ENCODE measurements at regions of chr9 and their contacts with region 1.

Region 1: DNA sequence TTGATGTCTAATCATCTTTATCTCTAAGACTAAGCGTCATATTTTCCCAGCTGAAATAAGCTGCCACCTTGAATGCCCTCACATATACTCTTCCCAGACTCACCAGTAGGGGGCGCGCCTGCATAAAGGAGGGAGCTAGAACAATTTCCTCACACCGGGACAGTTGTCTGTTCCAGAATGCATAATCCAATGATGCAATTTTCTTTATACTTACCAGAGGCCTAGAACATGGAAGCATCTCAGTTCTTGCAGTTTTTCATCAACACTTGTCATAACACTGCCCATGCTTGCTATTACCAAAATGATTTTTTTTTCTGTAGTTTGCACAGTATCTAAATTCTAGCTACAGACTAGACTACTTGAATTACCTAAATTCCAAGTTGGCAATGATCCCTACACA is 203.9 kb downstream of the FRMD3 start:
- DNase-seq: peak; percentile 81 to 92
- H3K4me3 ChIP-seq: no peak overlapping the region
- H3K27ac ChIP-seq: no peak overlapping the region
- H3K4me1 ChIP-seq: peaks cover 0 to 4% of the 10 kb centered on the region in 2 donors
- H3K27me3 ChIP-seq: no peaks in the 10 kb centered on the region
- CTCF ChIP-seq: peak; percentile 94 to 96 (median 95)
- POLR2A ChIP-seq: no peak

Region 2: GRCh38 chr9:83204047-83204446 is 130.3 kb before region 1 on chr9:
- intact Hi-C with region 1: loop called (anchors 10 kb)
- DNase-seq: peak in 1 of 2 donors; percentile 10
- H3K4me3 ChIP-seq: no peak overlapping the region
- H3K27ac ChIP-seq: no peak overlapping the region
- H3K4me1 ChIP-seq: no peaks in the 10 kb centered on the region
- H3K27me3 ChIP-seq: no peaks in the 10 kb centered on the region
- CTCF ChIP-seq: peak in 4 of 6 experiments; percentile 12 to 41 (median 32)
- POLR2A ChIP-seq: no peak

Region 3: GRCh38 chr9:83384214-83384613 is 49.9 kb after region 1 on chr9:
- intact Hi-C with region 1: no loop called
- DNase-seq: no peak
- H3K4me3 ChIP-seq: no peak overlapping the region
- H3K27ac ChIP-seq: no peak overlapping the region
- H3K4me1 ChIP-seq: no peaks in the 10 kb centered on the region
- H3K27me3 ChIP-seq: no peaks in the 10 kb centered on the region
- CTCF ChIP-seq: no peak
- POLR2A ChIP-seq: no peak

Region 4: DNA sequence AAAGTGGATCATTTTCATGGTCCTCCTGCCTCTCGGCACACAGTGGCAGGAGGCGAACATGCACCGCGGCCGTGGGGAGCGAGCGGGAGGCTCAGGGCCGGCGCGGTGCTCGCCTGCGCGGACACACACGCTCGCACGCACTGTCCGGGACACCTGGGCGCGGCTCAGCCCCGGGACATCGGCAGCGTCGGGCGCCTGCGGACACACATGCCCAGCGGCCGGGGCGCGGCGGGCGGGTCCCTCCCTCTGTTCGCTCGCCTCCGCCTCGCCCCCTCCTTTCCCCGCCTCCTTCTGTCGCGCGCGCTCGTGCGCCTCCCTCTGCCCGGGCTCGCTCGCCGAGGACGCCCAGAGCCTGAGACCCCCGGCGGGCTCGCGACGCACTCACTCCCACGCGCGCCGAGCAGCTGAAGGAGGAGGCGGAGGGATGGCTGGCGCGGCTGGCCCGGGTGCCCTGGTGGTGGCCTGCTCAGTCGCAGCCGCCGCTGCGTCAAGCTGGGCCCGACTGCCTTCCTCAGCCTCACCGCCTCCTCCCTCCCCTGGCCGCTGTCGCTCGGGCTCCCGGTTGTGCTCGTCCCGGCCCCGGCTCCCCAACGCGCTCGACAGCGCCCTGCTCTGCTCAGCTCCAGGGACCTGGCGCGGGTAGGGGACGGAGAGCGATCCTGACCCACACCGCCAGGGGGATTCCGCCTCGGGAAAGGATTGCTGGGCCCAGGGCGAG is 204.0 kb after region 1 on chr9 and contains the start of gene FRMD3:
- intact Hi-C with region 1: loop called (anchors 5 kb)
- DNase-seq: peak; percentile 91 to 94
- H3K4me3 ChIP-seq: peak within 1 kb of the TSS; percentile 17 to 62 (median 58)
- H3K27ac ChIP-seq: peak within 1 kb of the TSS; percentile 45 to 79 (median 52)
- H3K4me1 ChIP-seq: peaks cover 0 to 16% of the 10 kb centered on the region in 2 donors
- H3K27me3 ChIP-seq: no peaks in the 10 kb centered on the region
- CTCF ChIP-seq: peak; percentile 75 to 90 (median 86)
- POLR2A ChIP-seq: peak in 1 of 2 donors; percentile 79
- total RNA-seq, gene FRMD3: 15.9 to 28.6 (median 20.7) TPM

Measured in thyroid gland (tissue), 4 donors.